ENCODE measurements at regions of chr12 and their contacts with region 1.

Region 1: GRCh38 chr12:106136263-106136662 is 2.5 kb downstream of the NUAK1 start:
- DNase-seq: peak; percentile 74
- H3K4me3 ChIP-seq: peak overlapping the region; percentile 77
- H3K27ac ChIP-seq: peak overlapping the region; percentile 22
- H3K27me3 ChIP-seq: no peaks in the 10 kb centered on the region
- CTCF ChIP-seq: peak; percentile 81

Region 2: DNA sequence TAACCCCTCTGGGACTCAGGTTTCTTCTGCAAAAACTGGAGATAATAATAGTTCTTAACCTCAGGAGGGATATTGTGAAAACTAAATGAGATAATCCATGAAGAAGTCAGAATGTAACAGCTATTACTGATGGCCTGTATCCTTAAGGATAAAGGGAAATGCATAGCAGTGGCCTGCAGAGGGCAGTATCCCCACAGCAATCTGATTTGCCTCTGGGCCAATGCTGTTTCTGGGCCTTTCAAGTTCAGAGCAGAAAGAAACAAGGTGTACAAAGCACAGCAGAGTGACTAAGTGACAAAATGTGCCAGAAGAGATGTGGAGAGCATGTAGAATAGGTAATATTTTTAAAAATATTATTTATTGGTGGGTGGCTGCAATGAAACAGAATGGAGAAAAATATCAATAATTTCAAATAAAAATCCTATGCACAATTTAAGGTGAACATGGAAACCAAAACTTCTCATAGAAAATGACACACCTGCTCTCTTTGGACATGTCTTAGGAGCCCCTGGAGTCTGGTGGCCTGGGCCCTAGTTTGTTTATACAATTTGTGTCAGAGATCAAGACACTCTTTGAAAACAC is 715.5 kb before region 1 on chr12:
- CTCF ChIA-PET with region 1: interaction called, 70 read pairs
- POLR2A ChIA-PET with region 1: interaction called, 3 read pairs
- DNase-seq: peak; percentile 59
- H3K4me3 ChIP-seq: no peak overlapping the region
- H3K27ac ChIP-seq: no peak overlapping the region
- H3K27me3 ChIP-seq: no peaks in the 10 kb centered on the region
- CTCF ChIP-seq: peak; percentile 90

Region 3: DNA sequence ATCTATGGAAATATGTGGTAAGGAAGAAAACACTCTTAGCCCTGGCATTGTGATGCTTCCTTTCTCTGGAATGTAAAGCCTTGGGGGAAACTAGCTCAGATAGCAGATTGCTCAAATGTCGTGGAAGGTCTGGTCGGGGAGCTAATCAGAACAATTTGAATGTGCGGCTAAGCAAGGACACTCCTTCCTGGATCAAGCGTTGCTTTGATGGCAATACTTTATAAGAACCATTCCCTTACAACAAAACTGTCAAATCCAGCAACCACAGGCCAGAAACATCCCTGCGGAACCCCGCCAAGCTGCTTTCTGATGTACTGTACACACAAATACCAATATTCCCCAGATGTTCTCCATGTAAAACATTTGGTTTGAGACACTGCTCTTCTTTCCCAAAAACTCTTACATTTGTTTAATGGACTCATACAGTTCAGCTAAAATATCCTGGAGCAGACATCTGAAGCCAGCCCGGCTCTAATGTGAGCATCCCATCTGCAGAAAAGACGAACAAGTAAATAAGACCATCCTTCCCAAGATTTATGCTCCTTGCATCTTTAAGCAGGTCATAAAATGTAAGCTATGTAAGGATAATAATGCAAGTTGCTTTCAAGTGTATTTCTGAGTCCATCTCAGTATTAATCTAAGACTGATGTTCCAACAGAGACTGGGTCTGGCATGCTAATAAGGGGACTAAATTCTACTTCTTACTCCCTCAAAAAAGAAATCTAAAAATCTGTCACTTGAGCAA is 17.7 kb before region 1 on chr12:
- CTCF ChIA-PET with region 1: interaction called, 10 read pairs
- POLR2A ChIA-PET with region 1: no interaction called
- DNase-seq: no peak
- H3K4me3 ChIP-seq: no peak overlapping the region
- H3K27ac ChIP-seq: no peak overlapping the region
- H3K27me3 ChIP-seq: no peaks in the 10 kb centered on the region
- CTCF ChIP-seq: no peak

Region 4: GRCh38 chr12:106149096-106149784 is 13.0 kb after region 1 on chr12:
- CTCF ChIA-PET with region 1: interaction called, 27 read pairs
- POLR2A ChIA-PET with region 1: interaction called, 3 read pairs
- DNase-seq: no peak
- H3K4me3 ChIP-seq: no peak overlapping the region
- H3K27ac ChIP-seq: no peak overlapping the region
- H3K27me3 ChIP-seq: no peaks in the 10 kb centered on the region
- CTCF ChIP-seq: peak; percentile 81

Measured in AG04450 (cell line).